ENCODE measurements at regions of chr21 and their contacts with region 1.

Region 1: DNA sequence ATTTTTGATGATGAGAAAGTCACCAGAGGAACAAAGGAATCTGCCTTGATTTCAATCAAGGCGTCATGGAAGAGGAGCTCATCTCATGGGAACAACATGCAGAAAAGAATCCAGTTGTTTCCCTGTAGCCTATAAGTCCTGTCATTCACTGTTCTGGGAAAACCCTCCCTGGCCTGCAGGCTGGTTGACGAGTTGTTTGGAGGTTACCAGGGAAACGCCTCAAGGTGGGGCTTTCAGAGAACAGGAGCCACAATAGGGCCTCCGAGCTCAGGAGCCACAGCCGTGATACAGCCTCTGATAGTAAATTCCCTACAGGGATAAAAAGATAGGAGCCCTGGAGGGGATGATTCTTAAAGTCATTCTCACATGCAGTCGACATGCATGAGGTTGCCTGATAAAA is 135.2 kb downstream of the PSMG1 start:
- DNase-seq: peak; percentile 94
- H3K4me3 Mint-ChIP-seq: peak overlapping the region; percentile 44
- H3K27ac Mint-ChIP-seq: peak overlapping the region; percentile 99
- H3K4me1 Mint-ChIP-seq: peaks cover 38% of the 10 kb centered on the region
- H3K27me3 Mint-ChIP-seq: no peaks in the 10 kb centered on the region
- CTCF ChIP-seq: no peak

Region 2: DNA sequence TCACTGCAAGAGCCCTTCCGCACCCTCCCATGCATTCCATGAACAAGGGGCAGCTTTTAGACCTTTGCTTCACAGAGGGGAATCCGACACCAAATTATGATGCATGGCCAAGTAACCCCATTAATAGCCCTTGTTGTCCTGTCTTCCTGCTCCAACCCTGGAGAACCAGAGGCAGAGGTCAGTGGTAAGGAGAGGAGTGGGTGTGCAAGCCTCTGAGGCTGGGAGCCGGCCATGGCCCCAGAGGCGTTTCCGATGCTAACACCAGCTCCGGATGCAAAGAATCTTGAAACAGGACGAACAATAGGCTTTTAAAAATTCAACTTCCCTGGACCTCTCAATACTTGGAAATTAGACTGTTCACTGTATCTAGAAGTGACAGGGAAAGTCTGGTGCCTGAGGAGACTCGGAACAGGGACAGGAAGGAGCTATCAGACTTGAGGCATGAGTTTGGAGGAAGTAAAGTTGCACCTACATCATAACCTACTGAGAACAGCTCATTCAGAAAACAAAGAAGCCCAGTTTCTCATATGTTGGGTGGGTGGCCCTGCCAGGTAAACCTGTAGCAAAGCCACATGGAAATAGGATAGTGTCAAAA is 448.6 kb before region 1 on chr21:
- CTCF ChIA-PET with region 1: no interaction called
- POLR2A ChIA-PET with region 1: no interaction called
- intact Hi-C with region 1: no loop called
- DNase-seq: no peak
- H3K4me3 Mint-ChIP-seq: no peak overlapping the region
- H3K27ac Mint-ChIP-seq: no peak overlapping the region
- H3K4me1 Mint-ChIP-seq: no peaks in the 10 kb centered on the region
- H3K27me3 Mint-ChIP-seq: peaks cover 64% of the 10 kb centered on the region
- CTCF ChIP-seq: no peak

Region 3: GRCh38 chr21:38743761-38744529 is 304.1 kb before region 1 on chr21:
- CTCF ChIA-PET with region 1: no interaction called
- POLR2A ChIA-PET with region 1: no interaction called
- intact Hi-C with region 1: no loop called
- DNase-seq: no peak
- H3K4me3 Mint-ChIP-seq: no peak overlapping the region
- H3K27ac Mint-ChIP-seq: no peak overlapping the region
- H3K4me1 Mint-ChIP-seq: no peaks in the 10 kb centered on the region
- H3K27me3 Mint-ChIP-seq: no peaks in the 10 kb centered on the region
- CTCF ChIP-seq: no peak

Region 4: DNA sequence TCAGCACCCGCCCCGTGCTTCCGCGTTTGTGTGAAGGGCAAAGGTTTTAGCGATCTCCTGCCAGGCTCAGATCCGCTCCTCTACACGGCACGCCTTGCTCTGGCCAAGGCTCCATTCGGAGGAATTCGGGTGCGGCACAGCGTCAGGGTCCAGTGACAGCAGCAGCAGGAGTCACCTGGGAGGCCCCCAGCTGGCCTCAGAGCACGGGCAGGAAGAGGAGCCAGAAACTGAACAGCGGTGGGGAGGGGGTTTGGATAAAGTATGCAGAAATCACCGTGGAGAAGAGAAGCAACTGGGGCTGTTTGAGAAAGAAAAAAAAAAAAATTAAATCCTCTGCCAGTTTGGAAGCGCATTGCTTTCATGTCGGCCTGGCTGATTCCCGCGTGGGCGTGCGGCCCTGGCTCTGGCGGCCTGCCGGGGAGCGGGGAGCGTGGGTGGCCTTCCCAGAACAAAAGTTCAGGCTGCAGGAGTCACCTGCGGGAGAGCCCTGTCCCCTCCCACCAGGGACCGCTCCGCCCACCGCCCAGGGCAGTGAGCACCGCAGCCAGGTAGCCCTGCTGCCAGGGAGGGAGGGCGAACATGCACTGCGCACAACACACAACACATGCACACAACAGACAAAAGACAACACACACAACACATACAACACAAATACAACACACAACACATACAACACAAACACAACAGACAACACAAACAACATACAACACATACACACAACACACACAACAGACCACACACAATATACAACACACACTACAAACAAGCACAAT is 134.8 kb before region 1 on chr21:
- CTCF ChIA-PET with region 1: interaction called, 3 read pairs
- POLR2A ChIA-PET with region 1: interaction called, 15 read pairs
- intact Hi-C with region 1: loop called (anchors 10 kb)
- DNase-seq: peak; percentile 92
- H3K4me3 Mint-ChIP-seq: no peak overlapping the region
- H3K27ac Mint-ChIP-seq: no peak overlapping the region
- H3K4me1 Mint-ChIP-seq: peaks cover 9% of the 10 kb centered on the region
- H3K27me3 Mint-ChIP-seq: no peaks in the 10 kb centered on the region
- CTCF ChIP-seq: no peak

Region 5: DNA sequence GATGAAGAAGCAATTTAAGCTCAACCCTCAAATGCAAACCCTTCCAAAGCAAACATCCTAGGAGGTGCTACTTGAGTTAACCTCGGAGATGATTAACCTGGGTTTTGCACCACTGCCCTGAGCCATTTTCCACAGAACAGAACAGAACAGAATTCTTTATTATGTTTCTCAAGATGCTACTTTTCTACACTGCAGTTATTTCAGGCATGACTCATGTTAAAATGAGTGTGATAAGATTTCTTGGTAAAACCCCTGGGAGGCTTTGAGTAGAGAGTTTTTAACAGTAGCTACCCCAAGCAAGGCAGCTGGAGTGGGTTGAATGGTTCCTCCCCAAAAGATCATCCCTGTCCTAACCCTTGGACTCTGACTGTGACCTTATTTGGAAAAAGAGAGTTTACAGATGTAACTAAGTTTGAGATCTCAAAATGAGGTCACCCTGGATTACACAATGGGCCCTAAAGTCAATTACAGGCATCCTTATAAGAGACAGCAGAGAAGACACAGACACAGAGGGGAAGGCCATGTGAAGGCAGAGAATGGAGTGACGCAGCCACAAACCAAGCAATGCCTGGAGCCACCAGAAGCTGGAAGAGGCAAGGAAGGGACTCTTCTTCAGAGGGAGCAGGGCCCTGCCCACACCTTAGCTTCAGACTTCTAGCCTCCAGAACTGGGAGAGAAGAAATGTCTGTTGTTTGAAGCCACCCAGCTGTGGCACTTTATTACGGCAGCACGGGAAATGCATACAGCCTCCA is 88.9 kb before region 1 on chr21:
- CTCF ChIA-PET with region 1: no interaction called
- POLR2A ChIA-PET with region 1: interaction called, 10 read pairs
- intact Hi-C with region 1: no loop called
- DNase-seq: peak; percentile 49
- H3K4me3 Mint-ChIP-seq: no peak overlapping the region
- H3K27ac Mint-ChIP-seq: peak overlapping the region; percentile 86
- H3K4me1 Mint-ChIP-seq: peaks cover 31% of the 10 kb centered on the region
- H3K27me3 Mint-ChIP-seq: no peaks in the 10 kb centered on the region
- CTCF ChIP-seq: no peak

Region 6: DNA sequence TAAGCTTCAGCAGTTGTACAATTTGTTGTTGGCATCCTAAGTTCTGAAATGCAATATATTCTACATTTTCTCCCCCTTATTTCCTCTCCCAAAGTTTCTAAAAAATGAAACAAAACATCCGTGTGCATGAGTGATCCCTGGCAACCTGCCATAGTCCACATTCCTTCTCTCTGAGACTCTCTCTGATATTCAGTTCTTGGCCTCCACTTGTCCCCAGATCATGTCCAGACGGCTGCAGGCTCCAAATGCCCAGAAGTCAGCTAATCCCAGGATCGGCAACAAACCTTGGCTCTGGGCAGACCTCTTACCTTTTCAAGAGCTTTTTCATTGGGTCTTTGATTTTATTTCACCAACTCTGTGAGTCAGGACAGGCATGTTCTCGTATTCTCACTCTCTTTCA is 54.5 kb before region 1 on chr21:
- CTCF ChIA-PET with region 1: interaction called, 3 read pairs
- POLR2A ChIA-PET with region 1: interaction called, 15 read pairs
- intact Hi-C with region 1: no loop called
- DNase-seq: peak; percentile 95
- H3K4me3 Mint-ChIP-seq: peak overlapping the region; percentile 11
- H3K27ac Mint-ChIP-seq: peak overlapping the region; percentile 94
- H3K4me1 Mint-ChIP-seq: peaks cover 34% of the 10 kb centered on the region
- H3K27me3 Mint-ChIP-seq: no peaks in the 10 kb centered on the region
- CTCF ChIP-seq: no peak

Region 7: DNA sequence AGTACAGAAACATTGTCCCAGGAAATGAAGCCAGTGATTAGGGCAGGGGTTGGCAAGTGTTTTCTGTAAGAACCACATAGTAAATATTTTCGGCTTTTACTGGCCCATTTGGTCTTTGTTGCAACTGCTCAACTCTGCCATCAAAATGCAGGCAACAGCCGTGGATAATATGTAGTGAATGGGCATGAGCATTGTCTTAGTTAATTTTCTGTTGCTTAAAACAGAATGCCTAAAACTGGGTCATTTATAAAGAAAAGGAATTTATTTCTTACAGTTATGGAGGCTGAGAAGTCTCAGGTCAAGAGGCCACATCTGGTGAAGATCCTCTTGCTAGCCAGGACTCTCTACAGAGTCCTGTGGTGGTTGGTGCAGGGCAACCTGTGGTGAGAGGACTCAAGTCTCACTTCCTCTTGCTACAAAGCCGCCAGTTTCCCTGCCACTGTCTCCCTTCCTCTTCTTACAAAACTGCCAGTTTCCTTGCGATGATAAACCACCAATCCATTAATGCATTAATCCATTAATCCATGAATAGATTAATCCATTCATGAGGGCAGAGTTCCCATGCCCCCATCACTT is 31.2 kb before region 1 on chr21:
- CTCF ChIA-PET with region 1: interaction called, 5 read pairs
- POLR2A ChIA-PET with region 1: interaction called, 25 read pairs
- intact Hi-C with region 1: loop called (anchors 1 kb)
- DNase-seq: no peak
- H3K4me3 Mint-ChIP-seq: no peak overlapping the region
- H3K27ac Mint-ChIP-seq: no peak overlapping the region
- H3K4me1 Mint-ChIP-seq: peaks cover 27% of the 10 kb centered on the region
- H3K27me3 Mint-ChIP-seq: no peaks in the 10 kb centered on the region
- CTCF ChIP-seq: no peak

Region 8: GRCh38 chr21:39022863-39023693 is 25.0 kb before region 1 on chr21:
- CTCF ChIA-PET with region 1: interaction called, 5 read pairs
- POLR2A ChIA-PET with region 1: interaction called, 25 read pairs
- intact Hi-C with region 1: loop called (anchors 1 kb)
- DNase-seq: peak; percentile 33
- H3K4me3 Mint-ChIP-seq: no peak overlapping the region
- H3K27ac Mint-ChIP-seq: peak overlapping the region; percentile 66
- H3K4me1 Mint-ChIP-seq: peaks cover 24% of the 10 kb centered on the region
- H3K27me3 Mint-ChIP-seq: no peaks in the 10 kb centered on the region
- CTCF ChIP-seq: no peak

Region 9: DNA sequence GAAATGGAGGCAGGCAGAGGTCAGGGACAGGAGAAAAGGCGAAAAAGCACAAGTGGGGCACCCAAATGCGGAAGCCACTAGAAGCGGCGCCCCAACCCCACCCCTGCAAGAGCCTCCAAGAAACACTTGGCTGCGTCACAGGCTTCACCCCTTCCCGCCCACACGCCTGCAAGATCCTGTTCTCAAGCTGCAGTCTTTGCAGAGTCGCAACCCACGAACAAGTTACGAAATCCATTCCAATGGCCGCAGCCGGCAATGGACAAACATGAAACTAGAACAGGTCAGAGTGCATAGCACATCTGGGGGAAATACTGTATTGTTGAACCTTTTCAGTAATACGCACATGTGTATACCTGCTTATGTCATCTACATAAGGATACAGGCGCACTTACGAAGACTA is 31.6 kb after region 1 on chr21:
- CTCF ChIA-PET with region 1: interaction called, 3 read pairs
- POLR2A ChIA-PET with region 1: interaction called, 4 read pairs
- intact Hi-C with region 1: loop called (anchors 5 kb)
- DNase-seq: peak; percentile 76
- H3K4me3 Mint-ChIP-seq: no peak overlapping the region
- H3K27ac Mint-ChIP-seq: no peak overlapping the region
- H3K4me1 Mint-ChIP-seq: peaks cover 14% of the 10 kb centered on the region
- H3K27me3 Mint-ChIP-seq: no peaks in the 10 kb centered on the region
- CTCF ChIP-seq: no peak

Region 10: GRCh38 chr21:39103689-39104088 is 55.6 kb after region 1 on chr21:
- CTCF ChIA-PET with region 1: no interaction called
- POLR2A ChIA-PET with region 1: no interaction called
- intact Hi-C with region 1: no loop called
- DNase-seq: no peak
- H3K4me3 Mint-ChIP-seq: no peak overlapping the region
- H3K27ac Mint-ChIP-seq: no peak overlapping the region
- H3K4me1 Mint-ChIP-seq: peaks cover 6% of the 10 kb centered on the region
- H3K27me3 Mint-ChIP-seq: no peaks in the 10 kb centered on the region
- CTCF ChIP-seq: no peak

Region 11: GRCh38 chr21:39150877-39151276 is 102.8 kb after region 1 on chr21:
- CTCF ChIA-PET with region 1: no interaction called
- POLR2A ChIA-PET with region 1: no interaction called
- intact Hi-C with region 1: no loop called
- DNase-seq: no peak
- H3K4me3 Mint-ChIP-seq: no peak overlapping the region
- H3K27ac Mint-ChIP-seq: no peak overlapping the region
- H3K4me1 Mint-ChIP-seq: no peaks in the 10 kb centered on the region
- H3K27me3 Mint-ChIP-seq: no peaks in the 10 kb centered on the region
- CTCF ChIP-seq: no peak

Measured in MCF 10A (cell line).